ENCODE measurements at regions of chr3 and their contacts with region 1.

Region 1: GRCh38 chr3:141471160-141471559 is 15.7 kb upstream of the RASA2 start:
- DNase-seq: no peak
- ATAC-seq: no peak
- H3K4me3 Mint-ChIP-seq: no peak overlapping the region
- H3K27ac Mint-ChIP-seq: peak overlapping the region; percentile 50
- H3K4me1 Mint-ChIP-seq: peaks cover 11% of the 10 kb centered on the region
- H3K27me3 Mint-ChIP-seq: no peaks in the 10 kb centered on the region
- CTCF ChIP-seq: no peak

Region 2: GRCh38 chr3:141174674-141175073 is 296.5 kb before region 1 on chr3:
- CTCF ChIA-PET with region 1: no interaction called
- POLR2A ChIA-PET with region 1: no interaction called
- intact Hi-C with region 1: no loop called
- DNase-seq: no peak
- ATAC-seq: no peak
- H3K4me3 Mint-ChIP-seq: no peak overlapping the region
- H3K27ac Mint-ChIP-seq: no peak overlapping the region
- H3K4me1 Mint-ChIP-seq: no peaks in the 10 kb centered on the region
- H3K27me3 Mint-ChIP-seq: peaks cover 7% of the 10 kb centered on the region
- CTCF ChIP-seq: no peak

Region 3: GRCh38 chr3:141212555-141212954 is 258.6 kb before region 1 on chr3:
- CTCF ChIA-PET with region 1: no interaction called
- POLR2A ChIA-PET with region 1: no interaction called
- intact Hi-C with region 1: no loop called
- DNase-seq: no peak
- ATAC-seq: no peak
- H3K4me3 Mint-ChIP-seq: no peak overlapping the region
- H3K27ac Mint-ChIP-seq: no peak overlapping the region
- H3K4me1 Mint-ChIP-seq: no peaks in the 10 kb centered on the region
- H3K27me3 Mint-ChIP-seq: peaks cover 7% of the 10 kb centered on the region
- CTCF ChIP-seq: no peak

Region 4: GRCh38 chr3:141250342-141250741 is 220.8 kb before region 1 on chr3:
- CTCF ChIA-PET with region 1: no interaction called
- POLR2A ChIA-PET with region 1: interaction called, 11 read pairs
- intact Hi-C with region 1: no loop called
- DNase-seq: no peak
- ATAC-seq: no peak
- H3K4me3 Mint-ChIP-seq: no peak overlapping the region
- H3K27ac Mint-ChIP-seq: no peak overlapping the region
- H3K4me1 Mint-ChIP-seq: no peaks in the 10 kb centered on the region
- H3K27me3 Mint-ChIP-seq: no peaks in the 10 kb centered on the region
- CTCF ChIP-seq: no peak

Measured in activated B cell treated with CpG ODN at 0.5 μM for 24 hours (primary cell).